ENCODE measurements at regions of chr17 and their contacts with region 1.

Region 1: DNA sequence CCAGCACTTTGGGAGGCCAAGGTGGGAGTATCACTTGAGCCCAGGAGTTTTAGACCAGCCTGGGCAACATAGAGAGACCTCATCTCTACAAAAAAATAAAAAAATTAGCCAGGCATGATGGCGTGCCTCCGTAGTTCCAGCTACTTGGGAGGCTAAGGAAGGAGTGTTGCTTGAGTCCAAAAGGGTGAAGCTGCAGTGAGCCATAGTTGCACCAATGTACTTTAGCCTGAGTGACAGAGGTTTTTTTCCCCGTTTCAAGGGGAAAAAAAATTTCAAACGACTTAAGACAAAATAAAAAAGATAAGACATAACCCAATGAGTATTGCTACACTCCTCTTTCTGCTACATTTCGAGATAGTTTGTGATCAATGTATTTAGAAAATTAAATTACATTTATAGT is 6.8 kb downstream of the DHX8 start:
- DNase-seq: no peak
- H3K4me3 ChIP-seq: no peak overlapping the region
- H3K27ac ChIP-seq: no peak overlapping the region
- H3K4me1 ChIP-seq: no peaks in the 10 kb centered on the region
- H3K27me3 ChIP-seq: no peaks in the 10 kb centered on the region
- CTCF ChIP-seq: no peak
- EP300 ChIP-seq: no peak
- POLR2A ChIP-seq: no peak

Region 2: GRCh38 chr17:42850954-42851353 is 639.7 kb before region 1 on chr17 and contains the start of gene AOC3:
- intact Hi-C with region 1: loop called in 1 of 4 experiments (anchors 10 kb)
- DNase-seq: peak in 4 of 5 donors; percentile 38 to 61 (median 58)
- H3K4me3 ChIP-seq: peak within 1 kb of the TSS; percentile 32
- H3K27ac ChIP-seq: no peak within 1 kb of the TSS
- H3K4me1 ChIP-seq: peaks cover 5% of the 10 kb centered on the region
- H3K27me3 ChIP-seq: no peaks in the 10 kb centered on the region
- CTCF ChIP-seq: no peak
- EP300 ChIP-seq: no peak
- POLR2A ChIP-seq: no peak
- total RNA-seq, gene AOC3: 0.72 to 112 (median 12.4) TPM

Measured in ovary (tissue), 10 donors.